ENCODE measurements at regions of chr9 and their contacts with region 1.

Region 1: DNA sequence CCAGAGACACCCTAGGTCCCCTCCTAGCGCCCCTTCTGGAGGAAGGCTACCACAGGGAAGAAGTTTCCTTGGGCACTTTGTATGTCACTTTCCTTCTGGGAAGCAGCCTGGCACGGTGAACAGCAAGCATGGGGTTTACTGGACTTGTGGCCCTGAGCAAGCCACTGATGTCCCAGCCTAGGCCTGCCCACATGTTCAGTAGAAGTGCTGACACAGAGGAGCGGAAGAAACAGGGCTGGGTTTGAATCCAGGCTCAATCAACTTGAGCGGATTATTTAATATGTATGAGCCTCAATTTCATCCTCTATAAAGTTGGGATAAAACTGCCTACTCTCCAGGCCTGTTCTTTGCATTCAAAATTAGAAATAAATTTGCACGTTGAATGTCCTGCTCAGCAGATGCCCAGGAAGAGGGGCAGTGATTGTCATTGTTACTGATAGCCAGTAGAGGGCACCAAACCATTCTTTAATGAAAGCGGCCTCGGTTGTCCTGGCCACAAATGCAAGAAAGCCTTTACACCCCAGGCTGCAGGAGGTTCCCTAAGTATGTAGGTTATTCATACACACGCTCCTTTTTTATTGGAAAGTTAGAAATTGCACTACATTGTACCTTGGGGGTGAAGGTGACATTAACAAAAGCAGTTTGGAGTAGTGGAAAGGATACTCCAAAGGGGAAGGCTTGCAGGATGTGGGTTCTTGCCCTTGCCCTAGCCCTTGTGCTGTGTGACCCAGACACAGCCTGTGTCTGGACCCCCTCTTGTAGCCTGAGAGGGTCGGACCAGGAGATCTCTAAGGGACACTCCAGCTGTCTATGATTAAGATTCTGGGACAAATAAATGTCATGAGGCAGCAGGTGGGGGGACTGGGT is 13.4 kb upstream of the XPA start:
- DNase-seq: peak in 7 of 9 donors; percentile 32 to 65 (median 56)
- ATAC-seq: peak; percentile 92
- H3K4me3 ChIP-seq: no peak overlapping the region
- H3K4me3 Mint-ChIP-seq: peak overlapping the region in 5 of 10 donors; percentile 21 to 44 (median 38)
- H3K27ac ChIP-seq: no peak overlapping the region
- H3K27ac Mint-ChIP-seq: peak overlapping the region in 2 of 9 donors; percentile 6 to 46
- H3K4me1 ChIP-seq: peaks cover 17 to 18% of the 10 kb centered on the region in 2 donors
- H3K4me1 Mint-ChIP-seq: peaks cover 12 to 42% (median 22%) of the 10 kb centered on the region in 7 donors
- H3K27me3 ChIP-seq: no peaks in the 10 kb centered on the region
- H3K27me3 Mint-ChIP-seq: peaks cover 0 to 37% (median 13%) of the 10 kb centered on the region in 5 donors

Region 2: DNA sequence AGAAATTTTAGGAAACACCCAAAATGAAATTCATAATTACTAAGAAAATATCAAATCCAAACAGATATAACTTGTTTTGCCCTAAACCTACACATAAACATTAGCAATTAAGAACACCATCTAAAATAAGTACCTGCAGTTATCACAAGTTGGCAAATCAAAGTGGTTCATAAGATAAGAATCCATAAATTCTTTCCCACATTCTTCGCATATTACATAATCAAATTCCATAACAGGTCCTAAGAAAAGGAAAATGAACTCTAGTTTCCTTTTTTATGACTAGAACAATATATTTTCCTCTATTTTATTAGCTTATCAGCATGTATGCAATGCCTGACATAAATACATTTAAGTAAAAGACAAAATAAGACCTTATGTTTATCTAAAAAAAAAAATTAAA is 21.2 kb before region 1 on chr9:
- CTCF ChIA-PET with region 1: no interaction called
- POLR2A ChIA-PET with region 1: no interaction called
- intact Hi-C with region 1: no loop called
- DNase-seq: no peak
- ATAC-seq: no peak
- H3K4me3 ChIP-seq: no peak overlapping the region
- H3K4me3 Mint-ChIP-seq: no peak overlapping the region
- H3K27ac ChIP-seq: no peak overlapping the region
- H3K27ac Mint-ChIP-seq: peak overlapping the region in 5 of 9 donors; percentile 4 to 75 (median 41)
- H3K4me1 ChIP-seq: peaks cover 1 to 7% of the 10 kb centered on the region in 2 donors
- H3K4me1 Mint-ChIP-seq: peaks cover 13 to 44% (median 26%) of the 10 kb centered on the region in 7 donors
- H3K27me3 ChIP-seq: no peaks in the 10 kb centered on the region
- H3K27me3 Mint-ChIP-seq: no peaks in the 10 kb centered on the region

Region 3: DNA sequence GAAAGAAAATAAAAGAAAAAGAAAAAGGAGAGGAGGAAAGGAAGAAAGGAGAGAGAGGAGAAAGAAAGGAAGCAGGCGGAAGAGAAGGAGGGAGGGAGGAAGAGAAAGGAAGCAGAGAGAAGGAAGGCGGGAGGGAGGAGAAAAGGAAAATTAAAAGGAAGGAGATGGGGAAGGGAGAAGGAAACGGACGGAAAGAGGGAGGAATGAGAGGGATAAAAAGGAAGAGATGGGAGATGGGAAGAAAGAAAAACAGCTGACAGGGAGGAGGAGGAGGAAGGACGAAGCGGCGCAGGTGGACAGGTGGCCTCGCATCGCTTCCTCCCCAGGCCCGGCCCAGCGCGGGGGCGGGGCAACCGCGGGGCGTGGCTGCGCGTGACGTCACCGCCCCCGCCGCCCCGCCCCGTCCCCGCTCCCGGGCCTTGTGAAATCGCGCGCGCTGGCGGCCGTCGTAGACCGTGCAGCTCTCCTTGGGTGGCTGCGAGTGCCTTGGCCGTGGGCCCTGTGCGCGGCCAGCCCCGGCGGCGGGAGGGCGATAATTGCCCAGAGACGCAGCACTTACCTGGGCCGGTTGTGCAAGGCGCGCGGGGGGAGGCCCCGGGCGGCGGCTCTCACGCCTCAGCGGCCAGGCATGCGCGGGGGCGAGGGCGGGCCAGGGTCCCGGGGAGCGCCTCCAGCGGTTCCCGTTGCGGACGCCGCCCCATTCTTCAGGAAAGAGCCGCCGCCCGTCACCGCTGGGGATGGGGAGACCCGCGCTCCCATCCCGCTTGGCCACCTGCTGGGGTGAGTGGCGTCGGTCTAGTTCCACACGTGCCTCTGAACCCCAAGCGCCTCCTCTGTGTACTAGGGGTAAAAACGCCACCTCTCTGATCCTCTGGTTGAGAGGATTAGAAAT is 92.8 kb after region 1 on chr9:
- CTCF ChIA-PET with region 1: no interaction called
- POLR2A ChIA-PET with region 1: no interaction called
- intact Hi-C with region 1: loop called (anchors 1 to 2 kb)
- DNase-seq: peak; percentile 59 to 77 (median 75)
- ATAC-seq: peak; percentile 98
- H3K4me3 ChIP-seq: peak overlapping the region; percentile 72
- H3K4me3 Mint-ChIP-seq: peak overlapping the region; percentile 78 to 92 (median 87)
- H3K27ac ChIP-seq: peak overlapping the region; percentile 45
- H3K27ac Mint-ChIP-seq: peak overlapping the region in 7 of 9 donors; percentile 28 to 86 (median 80)
- H3K4me1 ChIP-seq: no peaks in the 10 kb centered on the region
- H3K4me1 Mint-ChIP-seq: peaks cover 0 to 13% (median 9%) of the 10 kb centered on the region in 7 donors
- H3K27me3 ChIP-seq: no peaks in the 10 kb centered on the region
- H3K27me3 Mint-ChIP-seq: peaks cover 4 to 51% (median 17%) of the 10 kb centered on the region in 5 donors

Region 4: GRCh38 chr9:97900738-97901565 is 190.4 kb after region 1 on chr9:
- CTCF ChIA-PET with region 1: interaction called, 6 read pairs
- POLR2A ChIA-PET with region 1: interaction called, 3 read pairs
- intact Hi-C with region 1: loop called (anchors 1 kb)
- DNase-seq: peak in 4 of 9 donors; percentile 27 to 43 (median 40)
- ATAC-seq: peak; percentile 36
- H3K4me3 ChIP-seq: no peak overlapping the region
- H3K4me3 Mint-ChIP-seq: peak overlapping the region in 8 of 10 donors; percentile 3 to 74 (median 32)
- H3K27ac ChIP-seq: peak overlapping the region; percentile 52
- H3K27ac Mint-ChIP-seq: peak overlapping the region in 8 of 9 donors; percentile 81 to 99 (median 94)
- H3K4me1 ChIP-seq: peaks cover 45 to 55% of the 10 kb centered on the region in 2 donors
- H3K4me1 Mint-ChIP-seq: peaks cover 39 to 73% (median 69%) of the 10 kb centered on the region in 7 donors
- H3K27me3 ChIP-seq: no peaks in the 10 kb centered on the region
- H3K27me3 Mint-ChIP-seq: no peaks in the 10 kb centered on the region

Region 5: DNA sequence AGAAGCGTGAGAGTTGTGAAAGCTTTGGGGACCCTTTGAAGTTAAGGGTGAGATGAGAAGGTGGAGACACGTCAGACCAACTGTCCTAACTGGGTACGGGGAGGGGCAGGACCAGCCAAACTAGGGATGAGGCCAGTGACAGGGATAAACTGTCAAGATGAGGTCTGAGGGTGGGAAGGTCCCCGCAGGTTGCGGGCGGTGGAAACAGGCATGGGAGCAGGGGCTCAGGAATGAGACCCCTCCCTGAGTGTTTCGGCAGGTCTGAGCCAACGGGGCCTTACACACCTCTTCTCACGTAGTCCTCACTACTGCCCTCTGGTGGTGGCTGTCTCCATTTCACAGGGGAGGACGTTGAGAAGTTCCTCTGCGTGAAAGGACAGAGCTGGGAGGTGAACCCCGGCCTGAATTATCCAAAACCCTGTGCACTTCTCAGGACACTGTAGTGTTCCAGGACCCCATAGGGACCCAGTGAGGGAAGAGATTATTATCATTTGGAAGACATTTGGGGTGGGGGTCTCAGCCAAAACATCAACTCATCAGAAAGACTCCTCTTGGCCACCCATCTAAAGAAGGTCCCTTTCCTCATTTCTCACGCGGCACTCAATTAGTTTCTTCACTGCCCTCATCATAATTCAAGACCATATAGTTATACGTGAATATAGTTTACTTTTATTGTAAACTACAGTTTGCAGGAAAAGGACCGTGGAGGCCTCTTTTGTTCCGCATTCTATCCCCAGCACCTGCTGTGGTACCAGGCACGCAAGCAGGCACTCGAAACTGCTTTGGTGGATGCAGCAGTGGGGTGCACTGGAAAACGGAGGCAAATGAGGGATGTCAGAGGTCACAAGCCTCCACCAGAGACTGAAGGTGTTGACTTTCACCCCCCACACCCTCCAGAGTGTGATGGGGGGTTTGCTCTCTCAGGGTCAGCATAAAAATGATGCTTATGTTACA is 324.3 kb after region 1 on chr9:
- CTCF ChIA-PET with region 1: no interaction called
- POLR2A ChIA-PET with region 1: no interaction called
- intact Hi-C with region 1: loop called (anchors 1 to 2 kb)
- DNase-seq: peak; percentile 76 to 92 (median 86)
- ATAC-seq: peak; percentile 99
- H3K4me3 ChIP-seq: no peak overlapping the region
- H3K4me3 Mint-ChIP-seq: peak overlapping the region in 8 of 10 donors; percentile 11 to 63 (median 41)
- H3K27ac ChIP-seq: no peak overlapping the region
- H3K27ac Mint-ChIP-seq: peak overlapping the region in 8 of 9 donors; percentile 9 to 87 (median 66)
- H3K4me1 ChIP-seq: peaks cover 0 to 4% of the 10 kb centered on the region in 2 donors
- H3K4me1 Mint-ChIP-seq: peaks cover 5 to 12% (median 8%) of the 10 kb centered on the region in 7 donors
- H3K27me3 ChIP-seq: no peaks in the 10 kb centered on the region
- H3K27me3 Mint-ChIP-seq: peaks cover 0 to 8% (median 0%) of the 10 kb centered on the region in 5 donors

Region 6: DNA sequence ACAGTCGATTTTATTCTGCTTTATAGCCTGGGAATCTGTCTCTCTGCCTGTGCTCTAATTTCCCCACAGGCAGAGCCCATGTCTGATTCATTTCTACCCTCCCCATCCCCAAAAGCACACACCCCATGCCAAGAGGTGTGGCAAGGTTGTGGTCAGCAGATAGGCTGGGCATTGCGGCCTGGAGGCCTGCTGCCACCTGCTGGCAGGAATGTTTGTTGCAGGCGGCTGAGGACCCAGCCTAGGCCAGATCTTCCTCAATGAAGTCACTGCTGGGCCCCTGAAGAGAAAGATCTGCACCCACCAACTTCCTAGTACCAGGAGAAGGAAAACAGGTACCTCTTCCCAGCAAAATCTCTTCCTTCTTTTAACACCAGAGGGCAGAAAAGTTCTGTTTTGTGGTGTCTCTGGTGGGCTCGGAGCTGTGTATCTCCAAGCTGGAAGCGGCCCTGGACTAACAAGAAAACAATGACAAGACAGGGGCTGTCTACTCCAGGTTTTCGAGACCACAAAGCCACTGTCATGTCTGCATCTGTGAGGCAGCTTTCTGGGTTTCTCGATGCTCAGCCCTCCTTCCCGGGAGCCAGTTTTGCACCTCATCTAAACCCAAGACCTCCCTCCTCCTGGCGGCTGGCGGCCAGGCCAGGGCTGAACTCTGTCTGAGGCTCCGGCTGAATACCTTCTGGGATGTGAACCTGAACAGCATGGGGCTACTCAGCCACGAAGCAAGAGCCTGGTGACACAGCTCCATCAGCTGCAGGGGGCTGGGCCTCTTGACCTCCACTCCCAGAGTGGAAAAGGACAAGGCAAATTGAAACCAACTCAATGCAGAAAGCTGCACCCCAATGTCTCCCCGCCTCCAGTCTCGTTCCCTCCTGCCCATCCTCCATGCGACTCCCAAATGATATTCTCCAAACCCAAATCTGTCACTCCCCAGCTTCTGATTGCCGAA is 1080.8 kb after region 1 on chr9:
- CTCF ChIA-PET with region 1: no interaction called
- POLR2A ChIA-PET with region 1: no interaction called
- intact Hi-C with region 1: loop called in 1 of 2 experiments (anchors 5 kb)
- DNase-seq: peak in 8 of 9 donors; percentile 24 to 74 (median 40)
- ATAC-seq: peak; percentile 88
- H3K4me3 ChIP-seq: no peak overlapping the region
- H3K4me3 Mint-ChIP-seq: peak overlapping the region in 2 of 10 donors; percentile 15 to 29
- H3K27ac ChIP-seq: no peak overlapping the region
- H3K27ac Mint-ChIP-seq: peak overlapping the region in 5 of 9 donors; percentile 5 to 56 (median 19)
- H3K4me1 ChIP-seq: peaks cover 6 to 16% of the 10 kb centered on the region in 2 donors
- H3K4me1 Mint-ChIP-seq: peaks cover 17 to 33% (median 30%) of the 10 kb centered on the region in 7 donors
- H3K27me3 ChIP-seq: no peaks in the 10 kb centered on the region
- H3K27me3 Mint-ChIP-seq: peaks cover 0 to 9% (median 0%) of the 10 kb centered on the region in 5 donors